SK-N-SH (cell line): ENCODE measurements at regions of chr17 and their contacts with region 1.

Region 1: GRCh38 chr17:34361478-34362061 is 1.5 kb downstream of the CCL1 start:
- DNase-seq: peak; percentile 82
- H3K4me3 ChIP-seq: no peak overlapping the region; a peak in 1 of 4 replicates
- H3K27ac ChIP-seq: no peak overlapping the region
- H3K4me1 ChIP-seq: no peaks in the 10 kb centered on the region
- H3K27me3 ChIP-seq: no peaks in the 10 kb centered on the region; the same call in 1 of the 2 replicates
- CTCF ChIP-seq: peak; percentile 100
- EP300 ChIP-seq: no peak
- RAD21 ChIP-seq: peak; percentile 100

Region 2: DNA sequence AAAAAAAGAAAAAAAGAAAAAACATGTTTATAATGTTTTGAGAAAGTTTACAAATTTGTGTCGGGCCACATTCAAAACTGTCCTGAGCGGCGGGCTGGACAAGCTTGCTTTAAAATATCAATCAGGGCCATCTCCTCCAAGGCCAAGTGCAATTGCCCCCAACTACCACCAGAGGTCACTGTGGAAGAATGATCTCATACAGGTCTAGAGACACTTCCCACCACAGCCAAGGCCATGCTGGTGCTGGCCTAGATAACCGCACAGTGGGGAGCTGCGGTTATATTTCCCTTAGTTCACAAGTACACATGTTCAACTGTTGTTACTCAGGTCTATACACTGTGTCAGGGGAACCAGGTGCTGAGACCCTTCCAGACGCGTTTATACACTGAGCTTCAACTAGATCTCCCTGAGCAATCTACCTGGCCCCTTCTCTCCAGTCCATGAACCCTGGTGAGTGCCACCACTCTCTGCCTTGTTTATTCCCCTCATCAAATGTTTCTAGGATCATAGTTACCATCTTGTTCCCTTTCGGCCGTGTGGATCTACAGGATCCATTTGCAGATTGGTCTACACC is 190.2 kb before region 1 on chr17:
- CTCF ChIA-PET with region 1: interaction called, 105 read pairs
- POLR2A ChIA-PET with region 1: no interaction called
- DNase-seq: peak; percentile 62
- H3K4me3 ChIP-seq: no peak overlapping the region; a peak in 1 of 4 replicates
- H3K27ac ChIP-seq: no peak overlapping the region
- H3K4me1 ChIP-seq: no peaks in the 10 kb centered on the region; a peak in 1 of 4 replicates
- H3K27me3 ChIP-seq: no peaks in the 10 kb centered on the region
- CTCF ChIP-seq: peak; percentile 87
- EP300 ChIP-seq: no peak
- RAD21 ChIP-seq: peak; percentile 56

Region 3: GRCh38 chr17:34220754-34221395 is 140.7 kb before region 1 on chr17:
- CTCF ChIA-PET with region 1: interaction called, 20 read pairs
- POLR2A ChIA-PET with region 1: no interaction called
- DNase-seq: no peak
- H3K4me3 ChIP-seq: no peak overlapping the region
- H3K27ac ChIP-seq: no peak overlapping the region
- H3K4me1 ChIP-seq: no peaks in the 10 kb centered on the region
- H3K27me3 ChIP-seq: no peaks in the 10 kb centered on the region
- CTCF ChIP-seq: no peak
- EP300 ChIP-seq: no peak
- RAD21 ChIP-seq: no peak

Region 4: DNA sequence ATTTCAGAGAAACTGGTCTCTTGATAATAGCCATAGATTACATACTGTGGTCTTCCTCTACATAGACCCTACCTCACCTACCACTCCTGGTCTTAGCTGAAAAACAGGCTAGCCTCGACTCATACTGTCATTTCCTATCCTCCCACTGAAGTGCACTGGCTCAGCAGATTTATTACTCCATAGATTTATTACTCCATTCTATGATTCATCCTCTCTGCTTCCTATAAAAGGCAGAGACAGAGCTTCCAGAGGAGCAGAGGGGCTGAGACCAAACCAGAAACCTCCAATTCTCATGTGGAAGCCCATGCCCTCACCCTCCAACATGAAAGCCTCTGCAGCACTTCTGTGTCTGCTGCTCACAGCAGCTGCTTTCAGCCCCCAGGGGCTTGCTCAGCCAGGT is 91.6 kb before region 1 on chr17 and contains the start of gene CCL7:
- CTCF ChIA-PET with region 1: interaction called, 19 read pairs
- POLR2A ChIA-PET with region 1: no interaction called
- DNase-seq: no peak
- H3K4me3 ChIP-seq: no peak within 1 kb of the TSS
- H3K27ac ChIP-seq: no peak within 1 kb of the TSS
- H3K4me1 ChIP-seq: no peaks in the 10 kb centered on the region
- H3K27me3 ChIP-seq: no peaks in the 10 kb centered on the region
- CTCF ChIP-seq: no peak
- EP300 ChIP-seq: no peak
- RAD21 ChIP-seq: no peak
- polyA plus RNA-seq, gene CCL7: 0.50 and 0.72 TPM in 2 replicates

Region 5: DNA sequence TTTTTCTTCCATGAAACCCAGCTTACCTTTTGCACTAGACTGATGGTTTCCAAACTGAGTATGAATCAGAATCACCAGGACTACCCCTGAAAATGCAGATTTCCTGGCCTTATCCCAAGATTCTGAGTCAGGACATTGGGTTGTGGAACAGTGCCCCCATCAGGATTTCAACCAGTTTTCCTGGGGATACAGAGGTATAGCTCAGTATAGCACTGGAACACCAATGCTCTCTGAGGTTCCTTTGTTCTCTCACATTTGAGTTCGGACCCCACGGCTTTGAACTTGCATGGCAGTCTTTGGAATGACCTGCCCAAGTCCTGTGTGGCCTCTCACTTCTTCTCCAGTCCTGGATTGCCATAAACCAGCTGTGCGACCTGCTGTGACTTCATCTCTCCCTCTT is 55.1 kb before region 1 on chr17:
- CTCF ChIA-PET with region 1: interaction called, 17 read pairs
- POLR2A ChIA-PET with region 1: no interaction called
- DNase-seq: peak; percentile 32
- H3K4me3 ChIP-seq: no peak overlapping the region
- H3K27ac ChIP-seq: no peak overlapping the region
- H3K4me1 ChIP-seq: 0 out of 4 replicates have a peak, but pooled peaks cover 0 to under 1% of the 10 kb centered on the region in 2 experiments
- H3K27me3 ChIP-seq: no peaks in the 10 kb centered on the region
- CTCF ChIP-seq: peak; percentile 75
- EP300 ChIP-seq: no peak
- RAD21 ChIP-seq: peak; percentile 70

Region 6: DNA sequence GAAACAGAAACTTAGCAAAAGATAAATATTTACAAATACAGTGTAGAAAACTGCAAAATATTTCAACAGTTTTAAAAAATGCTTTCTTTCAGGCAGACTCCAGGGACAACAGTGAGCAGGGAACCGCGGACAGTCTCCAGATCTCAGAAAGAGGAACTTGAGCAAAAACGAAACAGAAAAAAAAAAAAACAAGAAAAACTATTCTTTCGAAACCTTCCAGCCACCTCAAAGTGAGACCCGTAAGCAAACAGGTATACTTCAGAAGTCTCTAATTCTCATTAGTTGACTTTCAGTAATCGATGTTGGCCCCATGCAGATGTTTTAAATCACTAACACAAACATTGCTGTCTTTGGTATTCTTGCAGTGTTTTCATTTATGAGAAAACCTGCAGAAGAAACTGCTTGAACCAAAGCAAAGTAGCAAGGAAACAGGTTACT is 17.1 kb after region 1 on chr17:
- CTCF ChIA-PET with region 1: interaction called, 53 read pairs
- POLR2A ChIA-PET with region 1: no interaction called
- DNase-seq: no peak
- H3K4me3 ChIP-seq: no peak overlapping the region
- H3K27ac ChIP-seq: no peak overlapping the region
- H3K4me1 ChIP-seq: peaks cover 0 to 3% of the 10 kb centered on the region in 2 experiments; a peak in 1 of 4 replicates
- H3K27me3 ChIP-seq: no peaks in the 10 kb centered on the region
- CTCF ChIP-seq: no peak
- EP300 ChIP-seq: no peak
- RAD21 ChIP-seq: no peak

Region 7: GRCh38 chr17:34527908-34528470 is 166.4 kb after region 1 on chr17:
- CTCF ChIA-PET with region 1: no interaction called
- POLR2A ChIA-PET with region 1: no interaction called
- DNase-seq: peak; percentile 22
- H3K4me3 ChIP-seq: peak overlapping the region in 1 of 2 experiments; percentile 46; a peak in 1 of 4 replicates
- H3K27ac ChIP-seq: no peak overlapping the region
- H3K4me1 ChIP-seq: peaks cover 0 to 3% of the 10 kb centered on the region in 2 experiments; a peak in 1 of 4 replicates
- H3K27me3 ChIP-seq: no peaks in the 10 kb centered on the region; the same call in 1 of the 2 replicates
- CTCF ChIP-seq: peak; percentile 28; the same call in 1 of the 2 replicates
- EP300 ChIP-seq: no peak
- RAD21 ChIP-seq: no peak